Transverse colon (tissue), 4 donors: ENCODE measurements at regions of chr11 and their contacts with region 1.

Region 1: GRCh38 chr11:134008634-134009071 is 51.9 kb upstream of the IGSF9B start:
- DNase-seq: no peak
- H3K4me3 ChIP-seq: no peak overlapping the region
- H3K27ac ChIP-seq: no peak overlapping the region
- H3K4me1 ChIP-seq: peaks cover 0 to 10% (median 1%) of the 10 kb centered on the region in 4 donors
- H3K27me3 ChIP-seq: no peaks in the 10 kb centered on the region
- CTCF ChIP-seq: no peak
- EP300 ChIP-seq: no peak
- POLR2A ChIP-seq: no peak

Region 2: GRCh38 chr11:133004369-133004768 is 1004.3 kb before region 1 on chr11:
- in situ Hi-C with region 1: no loop called
- intact Hi-C with region 1: no loop called
- DNase-seq: no peak
- H3K4me3 ChIP-seq: no peak overlapping the region
- H3K27ac ChIP-seq: no peak overlapping the region
- H3K4me1 ChIP-seq: no peaks in the 10 kb centered on the region
- H3K27me3 ChIP-seq: no peaks in the 10 kb centered on the region
- CTCF ChIP-seq: no peak
- EP300 ChIP-seq: no peak
- POLR2A ChIP-seq: no peak

Region 3: GRCh38 chr11:133809569-133810491 is 198.8 kb before region 1 on chr11:
- in situ Hi-C with region 1: no loop called
- intact Hi-C with region 1: no loop called
- DNase-seq: no peak
- H3K4me3 ChIP-seq: no peak overlapping the region
- H3K27ac ChIP-seq: no peak overlapping the region
- H3K4me1 ChIP-seq: peaks cover 0 to 8% (median 0%) of the 10 kb centered on the region in 4 donors
- H3K27me3 ChIP-seq: no peaks in the 10 kb centered on the region
- CTCF ChIP-seq: no peak
- EP300 ChIP-seq: no peak
- POLR2A ChIP-seq: no peak

Region 4: GRCh38 chr11:134425816-134426536 is 417.3 kb after region 1 on chr11:
- in situ Hi-C with region 1: no loop called
- intact Hi-C with region 1: loop called (anchors 5 kb)
- DNase-seq: no peak
- H3K4me3 ChIP-seq: no peak overlapping the region
- H3K27ac ChIP-seq: no peak overlapping the region
- H3K4me1 ChIP-seq: no peaks in the 10 kb centered on the region
- H3K27me3 ChIP-seq: peaks cover 6% of the 10 kb centered on the region
- CTCF ChIP-seq: no peak
- EP300 ChIP-seq: no peak
- POLR2A ChIP-seq: no peak